ENCODE measurements at regions of chr16 and their contacts with region 1.

Region 1: GRCh38 chr16:2226245-2226793 is 2.9 kb downstream of the E4F1 start:
- DNase-seq: no peak
- ATAC-seq: no peak
- H3K4me3 Mint-ChIP-seq: no peak overlapping the region
- H3K27ac Mint-ChIP-seq: peak overlapping the region; percentile 36
- H3K4me1 Mint-ChIP-seq: peaks cover 22% of the 10 kb centered on the region
- H3K27me3 Mint-ChIP-seq: no peaks in the 10 kb centered on the region

Region 2: GRCh38 chr16:2251483-2252240 is 25.3 kb after region 1 on chr16 and contains the start of gene ECI1:
- CTCF ChIA-PET with region 1: interaction called, 18 read pairs
- DNase-seq: peak; percentile 93
- ATAC-seq: peak; percentile 92
- H3K4me3 Mint-ChIP-seq: peak within 1 kb of the TSS; percentile 89
- H3K27ac Mint-ChIP-seq: peak within 1 kb of the TSS; percentile 91
- H3K4me1 Mint-ChIP-seq: peaks cover 11% of the 10 kb centered on the region
- H3K27me3 Mint-ChIP-seq: no peaks in the 10 kb centered on the region
- total RNA-seq, gene ECI1: 48.9 to 57.3 TPM